ENCODE measurements at regions of chr2 and their contacts with region 1.

Region 1: GRCh38 chr2:84881581-84882414 is 914 bp upstream of the TRABD2A start:
- DNase-seq: peak; percentile 77
- H3K4me3 ChIP-seq: peak overlapping the region; percentile 62 to 66 (median 62)
- H3K27ac ChIP-seq: peak overlapping the region; percentile 10
- H3K4me1 ChIP-seq: peaks cover 13% of the 10 kb centered on the region
- H3K27me3 ChIP-seq: no peaks in the 10 kb centered on the region
- CTCF ChIP-seq: peak; percentile 58 to 78

Region 2: GRCh38 chr2:84495539-84496146 is 386.2 kb before region 1 on chr2:
- CTCF ChIA-PET with region 1: no interaction called
- dilution Hi-C with region 1: no loop called
- in situ Hi-C with region 1: loop called (anchors 10 to 25 kb)
- intact Hi-C with region 1: loop called (anchors 1 kb)
- DNase-seq: peak; percentile 39
- H3K4me3 ChIP-seq: no peak overlapping the region
- H3K27ac ChIP-seq: no peak overlapping the region
- H3K4me1 ChIP-seq: peaks cover 2% of the 10 kb centered on the region
- H3K27me3 ChIP-seq: no peaks in the 10 kb centered on the region
- CTCF ChIP-seq: peak; percentile 49 to 56

Region 3: DNA sequence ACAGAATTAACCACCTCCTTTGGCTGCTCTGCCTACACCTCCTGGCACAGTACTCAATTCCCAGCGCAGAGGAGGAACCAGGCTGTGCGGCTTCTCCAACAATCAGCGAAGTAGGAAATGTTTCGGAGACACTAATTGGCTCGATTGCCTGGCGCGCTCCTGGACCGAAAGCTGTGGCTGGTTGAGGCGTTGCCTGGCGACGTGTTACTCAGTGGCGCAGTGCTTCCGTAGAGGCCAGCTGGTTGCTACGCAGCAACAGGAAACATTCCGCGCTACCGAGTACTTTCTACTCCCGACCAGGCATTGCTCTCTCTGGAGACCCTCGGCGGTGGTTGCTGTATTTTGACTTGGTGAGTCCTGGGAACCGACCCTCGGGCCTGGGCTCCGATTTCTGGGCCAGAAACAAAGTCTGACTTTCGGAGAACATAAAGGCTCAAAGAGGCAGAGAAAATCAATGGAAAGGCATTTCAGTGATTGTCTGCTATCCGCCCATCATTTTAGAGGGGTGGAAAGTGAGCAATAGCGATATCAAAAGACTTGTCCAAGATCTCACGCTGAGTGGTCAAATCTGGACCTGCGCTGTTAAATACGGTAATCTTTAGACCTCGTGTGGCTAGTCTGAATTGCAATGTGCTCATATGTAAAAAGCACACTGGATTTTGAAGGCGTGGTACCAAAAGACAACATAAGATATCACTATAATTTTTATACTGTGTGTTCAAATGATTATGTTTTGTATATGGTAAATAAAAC is 365.4 kb before region 1 on chr2 and contains the start of gene DNAH6:
- CTCF ChIA-PET with region 1: no interaction called
- dilution Hi-C with region 1: no loop called
- in situ Hi-C with region 1: no loop called
- intact Hi-C with region 1: loop called (anchors 5 kb)
- DNase-seq: peak; percentile 94
- H3K4me3 ChIP-seq: peak within 1 kb of the TSS; percentile 62 to 78 (median 67)
- H3K27ac ChIP-seq: peak within 1 kb of the TSS; percentile 84
- H3K4me1 ChIP-seq: peaks cover 8% of the 10 kb centered on the region
- H3K27me3 ChIP-seq: no peaks in the 10 kb centered on the region
- CTCF ChIP-seq: no peak
- total RNA-seq, gene DNAH6: 0.45 to 0.50 TPM

Region 4: GRCh38 chr2:84631047-84631446 is 250.8 kb before region 1 on chr2:
- CTCF ChIA-PET with region 1: no interaction called
- dilution Hi-C with region 1: no loop called
- in situ Hi-C with region 1: no loop called
- intact Hi-C with region 1: no loop called
- DNase-seq: peak; percentile 24
- H3K4me3 ChIP-seq: no peak overlapping the region
- H3K27ac ChIP-seq: no peak overlapping the region
- H3K4me1 ChIP-seq: no peaks in the 10 kb centered on the region
- H3K27me3 ChIP-seq: no peaks in the 10 kb centered on the region
- CTCF ChIP-seq: peak; percentile 65 to 69

Region 5: DNA sequence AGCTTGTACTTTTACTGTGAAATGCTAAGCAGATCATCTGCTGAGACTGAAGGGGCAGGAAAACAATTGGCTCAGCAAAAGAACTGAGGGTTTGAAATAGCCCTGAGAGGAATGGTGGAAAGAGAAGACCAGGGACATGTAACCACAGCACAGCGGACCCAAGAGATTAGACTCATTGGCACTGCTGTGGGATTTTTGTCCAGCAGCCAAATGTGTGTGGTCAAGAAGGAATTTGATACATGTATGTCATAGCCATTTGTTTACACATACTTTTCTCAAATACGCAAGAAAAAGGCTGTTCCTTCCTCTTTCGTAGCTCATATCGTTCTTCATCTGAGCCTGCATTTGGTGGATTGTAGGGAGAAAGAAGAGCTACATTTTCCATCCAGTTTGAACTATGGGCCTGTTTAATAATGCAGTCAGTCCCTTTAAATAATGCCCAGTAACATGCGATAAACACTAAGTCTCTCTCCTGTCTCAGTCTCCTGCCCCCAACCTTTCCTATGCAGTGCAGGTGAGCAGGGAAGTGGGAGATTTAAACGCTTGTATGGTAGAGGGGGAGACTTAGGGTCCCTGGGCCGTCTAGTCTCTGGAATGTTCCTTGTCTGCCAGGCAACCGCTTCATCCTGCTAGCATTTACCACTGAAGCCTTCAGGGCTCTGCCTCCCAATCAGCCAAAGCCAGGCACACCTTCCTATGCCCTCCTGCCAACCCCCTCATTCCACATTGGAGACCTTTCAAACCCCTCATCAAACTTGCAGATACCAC is 74.6 kb before region 1 on chr2:
- CTCF ChIA-PET with region 1: no interaction called
- dilution Hi-C with region 1: loop called (anchors 5 kb)
- in situ Hi-C with region 1: no loop called
- intact Hi-C with region 1: no loop called
- DNase-seq: peak; percentile 74
- H3K4me3 ChIP-seq: no peak overlapping the region
- H3K27ac ChIP-seq: no peak overlapping the region
- H3K4me1 ChIP-seq: peaks cover 9% of the 10 kb centered on the region
- H3K27me3 ChIP-seq: no peaks in the 10 kb centered on the region
- CTCF ChIP-seq: no peak

Region 6: GRCh38 chr2:84905181-84906107 is 23.6 kb after region 1 on chr2 and contains the start of gene TMSB10:
- CTCF ChIA-PET with region 1: no interaction called
- dilution Hi-C with region 1: no loop called
- in situ Hi-C with region 1: no loop called
- intact Hi-C with region 1: loop called (anchors 2 kb)
- DNase-seq: peak; percentile 85
- H3K4me3 ChIP-seq: peak within 1 kb of the TSS; percentile 82 to 94 (median 94)
- H3K27ac ChIP-seq: peak within 1 kb of the TSS; percentile 81
- H3K4me1 ChIP-seq: peaks cover 3% of the 10 kb centered on the region
- H3K27me3 ChIP-seq: no peaks in the 10 kb centered on the region
- CTCF ChIP-seq: peak in 1 of 2 donors; percentile 16
- total RNA-seq, gene TMSB10: 3,165 to 4,185 TPM

Region 7: GRCh38 chr2:85011747-85012146 is 129.9 kb after region 1 on chr2:
- CTCF ChIA-PET with region 1: interaction called, 3 read pairs
- dilution Hi-C with region 1: no loop called
- in situ Hi-C with region 1: no loop called
- intact Hi-C with region 1: loop called (anchors 5 kb)
- DNase-seq: no peak
- H3K4me3 ChIP-seq: no peak overlapping the region
- H3K27ac ChIP-seq: no peak overlapping the region
- H3K4me1 ChIP-seq: peaks cover 37% of the 10 kb centered on the region
- H3K27me3 ChIP-seq: no peaks in the 10 kb centered on the region
- CTCF ChIP-seq: no peak

Measured in mammary epithelial cell (primary cell).